ENCODE measurements at regions of chr22 and their contacts with region 1.

Region 1: DNA sequence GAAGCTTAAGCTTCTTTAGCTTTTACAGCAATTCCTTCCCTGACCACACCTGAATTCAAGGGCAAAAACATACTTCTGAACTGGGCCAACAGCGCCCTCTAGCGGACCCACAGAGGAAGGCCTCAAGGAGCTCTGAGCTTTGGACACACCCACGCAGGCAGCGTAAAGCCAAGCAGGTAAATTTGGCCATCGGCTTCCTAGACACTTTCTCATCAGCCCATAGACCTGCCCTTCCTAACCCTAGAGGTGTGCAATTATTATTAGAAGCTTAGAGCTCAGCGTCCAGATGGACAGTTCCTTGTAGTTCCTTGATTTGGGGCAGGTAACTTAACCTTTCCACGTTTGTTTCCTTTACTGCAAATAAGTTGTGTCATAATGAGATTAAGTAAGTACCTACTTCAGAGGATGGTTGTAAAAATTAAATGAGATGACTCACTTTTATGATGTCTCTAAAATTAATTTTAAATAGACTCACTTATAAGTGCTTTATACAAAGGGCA is 25.7 kb upstream of the HMGXB4 start:
- DNase-seq: peak; percentile 80
- H3K4me3 Mint-ChIP-seq: no peak overlapping the region
- H3K27ac Mint-ChIP-seq: no peak overlapping the region
- H3K4me1 Mint-ChIP-seq: peaks cover 14% of the 10 kb centered on the region
- H3K27me3 Mint-ChIP-seq: peaks cover 39% of the 10 kb centered on the region

Region 2: GRCh38 chr22:35220221-35220620 is 11.4 kb before region 1 on chr22:
- CTCF ChIA-PET with region 1: interaction called, 10 read pairs
- DNase-seq: no peak
- H3K4me3 Mint-ChIP-seq: no peak overlapping the region
- H3K27ac Mint-ChIP-seq: no peak overlapping the region
- H3K4me1 Mint-ChIP-seq: no peaks in the 10 kb centered on the region
- H3K27me3 Mint-ChIP-seq: no peaks in the 10 kb centered on the region